Ascending aorta (tissue), 2 donors: ENCODE measurements at regions of chr14 and their contacts with region 1.

Region 1: GRCh38 chr14:54085232-54085761 is 128.7 kb upstream of the BMP4 start:
- DNase-seq: no peak
- H3K4me3 ChIP-seq: no peak overlapping the region
- H3K27ac ChIP-seq: no peak overlapping the region
- H3K4me1 ChIP-seq: no peaks in the 10 kb centered on the region
- H3K27me3 ChIP-seq: no peaks in the 10 kb centered on the region
- CTCF ChIP-seq: no peak

Region 2: GRCh38 chr14:54058505-54058904 is 26.8 kb before region 1 on chr14:
- intact Hi-C with region 1: no loop called
- DNase-seq: no peak
- H3K4me3 ChIP-seq: no peak overlapping the region
- H3K27ac ChIP-seq: no peak overlapping the region
- H3K4me1 ChIP-seq: no peaks in the 10 kb centered on the region
- H3K27me3 ChIP-seq: no peaks in the 10 kb centered on the region
- CTCF ChIP-seq: no peak

Region 3: GRCh38 chr14:54127526-54127925 is 42.2 kb after region 1 on chr14:
- intact Hi-C with region 1: loop called (anchors 5 kb)
- DNase-seq: no peak
- H3K4me3 ChIP-seq: no peak overlapping the region
- H3K27ac ChIP-seq: no peak overlapping the region
- H3K4me1 ChIP-seq: no peaks in the 10 kb centered on the region
- H3K27me3 ChIP-seq: no peaks in the 10 kb centered on the region
- CTCF ChIP-seq: no peak